Common myeloid progenitor, CD34-positive (primary cell): ENCODE measurements at regions of chr12 and their contacts with region 1.

Region 1: GRCh38 chr12:109858764-109859163 is 21.6 kb downstream of the GLTP start:
- DNase-seq: peak in 1 of 3 donors; percentile 15
- H3K4me3 ChIP-seq: no peak overlapping the region
- H3K27ac ChIP-seq: no peak overlapping the region
- H3K4me1 ChIP-seq: no peaks in the 10 kb centered on the region
- H3K27me3 ChIP-seq: no peaks in the 10 kb centered on the region

Region 2: GRCh38 chr12:109920261-109920780 is 61.6 kb after region 1 on chr12:
- CTCF ChIA-PET with region 1: interaction called, 10 read pairs
- POLR2A ChIA-PET with region 1: no interaction called
- DNase-seq: no peak
- H3K4me3 ChIP-seq: no peak overlapping the region
- H3K27ac ChIP-seq: no peak overlapping the region
- H3K4me1 ChIP-seq: no peaks in the 10 kb centered on the region
- H3K27me3 ChIP-seq: no peaks in the 10 kb centered on the region

Region 3: GRCh38 chr12:109927622-109928021 is 68.9 kb after region 1 on chr12:
- CTCF ChIA-PET with region 1: interaction called, 14 read pairs
- POLR2A ChIA-PET with region 1: no interaction called
- DNase-seq: peak; percentile 19 to 52 (median 43)
- H3K4me3 ChIP-seq: no peak overlapping the region
- H3K27ac ChIP-seq: no peak overlapping the region
- H3K4me1 ChIP-seq: no peaks in the 10 kb centered on the region
- H3K27me3 ChIP-seq: no peaks in the 10 kb centered on the region